ENCODE measurements at regions of chr18 and their contacts with region 1.

Region 1: GRCh38 chr18:12026562-12026961 is 45.3 kb downstream of the IMPA2 start:
- DNase-seq: no peak
- ATAC-seq: no peak
- H3K4me3 ChIP-seq: no peak overlapping the region
- H3K4me3 Mint-ChIP-seq: no peak overlapping the region
- H3K27ac ChIP-seq: no peak overlapping the region
- H3K27ac Mint-ChIP-seq: no peak overlapping the region
- H3K4me1 ChIP-seq: no peaks in the 10 kb centered on the region
- H3K4me1 Mint-ChIP-seq: no peaks in the 10 kb centered on the region
- H3K27me3 ChIP-seq: no peaks in the 10 kb centered on the region
- H3K27me3 Mint-ChIP-seq: no peaks in the 10 kb centered on the region

Region 2: GRCh38 chr18:12038639-12039417 is 12.3 kb after region 1 on chr18:
- CTCF ChIA-PET with region 1: interaction called in 1 of 2 experiments, 13 read pairs
- POLR2A ChIA-PET with region 1: no interaction called
- DNase-seq: peak; percentile 30 to 82 (median 57)
- ATAC-seq: peak; percentile 91 to 94 (median 93)
- H3K4me3 ChIP-seq: peak overlapping the region; percentile 44 to 76
- H3K4me3 Mint-ChIP-seq: peak overlapping the region; percentile 37 to 71 (median 57)
- H3K27ac ChIP-seq: no peak overlapping the region
- H3K27ac Mint-ChIP-seq: no peak overlapping the region
- H3K4me1 ChIP-seq: peaks cover 0 to 11% of the 10 kb centered on the region in 2 experiments
- H3K4me1 Mint-ChIP-seq: peaks cover 2 to 6% (median 4%) of the 10 kb centered on the region in 3 donors
- H3K27me3 ChIP-seq: peaks cover 3 to 30% of the 10 kb centered on the region in 2 experiments
- H3K27me3 Mint-ChIP-seq: peaks cover 15 to 18% of the 10 kb centered on the region in 2 donors

Region 3: GRCh38 chr18:12053289-12053688 is 26.7 kb after region 1 on chr18:
- CTCF ChIA-PET with region 1: no interaction called
- POLR2A ChIA-PET with region 1: no interaction called
- DNase-seq: no peak
- ATAC-seq: no peak
- H3K4me3 ChIP-seq: no peak overlapping the region
- H3K4me3 Mint-ChIP-seq: no peak overlapping the region
- H3K27ac ChIP-seq: no peak overlapping the region
- H3K27ac Mint-ChIP-seq: no peak overlapping the region
- H3K4me1 ChIP-seq: no peaks in the 10 kb centered on the region
- H3K4me1 Mint-ChIP-seq: peaks cover 0 to 4% (median 0%) of the 10 kb centered on the region in 3 donors
- H3K27me3 ChIP-seq: peaks cover 0 to 12% of the 10 kb centered on the region in 2 experiments
- H3K27me3 Mint-ChIP-seq: peaks cover 0 to 7% of the 10 kb centered on the region in 2 donors

Measured in T-cell (primary cell).